Heart right ventricle (tissue), 16 donors: ENCODE measurements at regions of chr10 and their contacts with region 1.

Region 1: DNA sequence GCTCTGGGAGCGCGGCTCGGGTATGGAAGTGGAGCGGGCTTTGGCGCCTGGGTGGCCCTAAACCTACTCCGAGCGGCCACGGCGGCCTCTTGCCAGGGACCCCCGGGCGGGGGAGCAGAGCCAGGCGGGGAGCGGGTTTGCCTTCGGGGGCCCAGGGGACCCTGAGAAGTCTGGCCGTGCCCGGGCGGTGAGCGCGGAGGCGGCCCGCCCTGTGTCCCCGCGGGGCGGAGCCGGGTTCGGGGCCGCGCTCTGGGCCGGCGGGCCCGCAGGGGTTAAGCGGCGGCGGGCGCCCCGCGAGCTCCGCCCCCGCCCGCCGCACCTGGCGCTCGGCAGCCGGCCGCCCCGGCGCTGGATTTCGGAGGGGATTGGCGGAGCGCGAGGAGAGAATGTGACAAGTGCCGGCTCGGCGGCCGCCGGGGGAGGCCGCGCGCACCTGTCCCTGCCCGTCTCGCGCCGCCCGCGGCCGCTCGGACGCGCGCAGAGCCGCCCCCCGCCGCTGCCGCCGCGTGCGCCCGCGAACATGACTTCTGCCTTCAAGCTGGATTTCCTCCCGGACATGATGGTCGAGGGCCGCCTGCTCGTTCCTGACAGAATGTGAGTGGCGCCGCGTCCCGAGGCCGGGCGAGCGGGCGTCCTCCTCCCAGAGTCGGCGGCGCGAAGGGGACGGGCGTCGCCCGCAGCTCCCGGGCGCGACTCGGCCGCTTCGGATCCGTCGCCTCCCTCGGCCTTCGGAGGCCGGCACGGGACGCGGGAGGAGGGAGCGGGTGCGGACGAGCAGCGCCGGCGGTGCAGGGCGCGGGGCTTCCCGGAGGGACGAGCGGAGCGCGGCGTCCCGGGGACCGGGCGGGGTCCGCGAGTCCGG is at the start of gene CELF2:
- DNase-seq: peak; percentile 73 to 77
- ATAC-seq: peak; percentile 54 to 92 (median 70)
- H3K4me3 ChIP-seq: peak within 1 kb of the TSS; percentile 53 to 98 (median 72)
- H3K27ac ChIP-seq: peak within 1 kb of the TSS; percentile 87 to 97 (median 92)
- H3K4me1 ChIP-seq: peaks cover 4 to 85% (median 45%) of the 10 kb centered on the region in 9 donors
- H3K27me3 ChIP-seq: peaks cover 0 to 72% (median 0%) of the 10 kb centered on the region in 7 donors
- CTCF ChIP-seq: no peak
- total RNA-seq, gene CELF2: 61.9 to 90.9 (median 82.2) TPM

Region 2: DNA sequence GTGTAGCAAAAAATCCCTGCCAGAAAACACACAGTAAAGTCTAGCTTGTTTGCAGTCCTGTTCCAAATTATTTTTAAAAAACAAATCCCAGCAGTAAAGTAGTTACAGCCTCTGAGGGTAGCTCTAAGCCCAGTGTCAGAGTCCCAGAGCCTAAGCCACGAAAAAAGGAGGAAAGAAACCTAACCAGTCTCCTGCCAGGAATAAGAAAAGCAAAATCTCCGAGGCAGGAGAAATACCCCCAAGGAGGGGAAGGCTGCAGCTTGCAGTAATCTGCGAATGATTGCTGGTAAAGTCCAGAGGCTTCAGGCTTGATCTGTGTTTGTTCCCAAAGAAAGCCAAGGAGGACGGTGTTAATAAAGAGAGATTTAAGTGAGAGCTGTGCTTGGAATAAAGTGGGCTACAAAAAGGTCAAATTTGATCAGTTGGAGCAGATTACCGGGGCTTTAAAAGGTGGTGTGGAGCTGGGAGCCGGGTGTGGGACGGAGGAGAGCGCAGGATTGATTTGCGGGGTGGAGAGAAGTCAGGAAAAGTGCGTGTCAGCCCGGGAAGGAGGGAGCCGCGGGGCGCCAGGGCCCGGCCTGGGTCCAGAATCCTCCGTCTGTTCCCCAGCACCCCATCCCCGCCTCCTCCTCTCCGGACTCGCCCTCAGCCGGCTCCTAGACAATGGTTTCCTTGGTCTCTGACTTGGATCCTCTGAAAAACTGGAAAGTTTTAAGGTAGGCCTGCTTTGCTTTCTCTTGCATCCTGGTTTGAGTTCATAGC is 219.5 kb before region 1 on chr10:
- intact Hi-C with region 1: loop called in 3 of 10 experiments (anchors 5 kb)
- DNase-seq: peak in 1 of 2 donors; percentile 25
- ATAC-seq: peak; percentile 29 to 70 (median 68)
- H3K4me3 ChIP-seq: peak overlapping the region in 9 of 10 donors; percentile 15 to 48 (median 32)
- H3K27ac ChIP-seq: peak overlapping the region; percentile 69 to 93 (median 84)
- H3K4me1 ChIP-seq: peaks cover 0 to 69% (median 32%) of the 10 kb centered on the region in 9 donors
- H3K27me3 ChIP-seq: no peaks in the 10 kb centered on the region
- CTCF ChIP-seq: peak in 2 of 9 donors; percentile 11 to 21

Region 3: DNA sequence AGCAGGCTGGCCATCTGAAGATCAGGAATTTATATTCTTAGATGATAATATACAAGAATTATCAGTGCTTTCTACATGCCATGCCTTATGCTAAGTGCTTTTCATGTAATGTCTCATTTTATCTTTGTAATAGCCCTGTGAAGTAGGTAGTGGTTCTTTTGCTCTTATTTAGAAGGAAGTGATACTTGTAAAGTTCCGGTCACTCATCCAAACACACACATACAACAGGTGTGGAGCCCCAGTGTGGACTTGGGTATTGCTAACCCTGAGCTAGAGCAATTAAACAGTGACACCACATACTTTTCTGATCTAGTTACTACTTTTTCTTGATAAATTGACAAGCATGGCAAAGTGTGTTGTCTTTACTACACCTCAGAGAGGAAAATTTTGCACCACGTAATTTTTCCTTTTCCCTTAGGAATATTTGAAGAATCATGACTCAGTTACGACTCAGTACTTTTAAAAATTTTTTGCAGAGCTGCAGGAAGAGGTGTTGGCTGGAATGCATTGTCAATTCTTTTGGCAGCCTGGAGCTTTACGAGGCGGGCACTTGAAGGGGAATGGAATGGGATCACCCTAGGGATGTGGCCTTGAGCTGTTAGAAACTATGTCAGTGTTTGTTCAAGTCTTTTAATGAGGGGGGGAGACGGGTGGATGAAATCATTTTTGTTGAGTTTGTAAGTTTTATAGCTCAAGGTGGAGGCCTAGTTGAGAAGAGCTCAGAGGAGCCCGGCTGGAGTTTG is 212.6 kb before region 1 on chr10:
- intact Hi-C with region 1: loop called in 2 of 10 experiments (anchors 5 to 10 kb)
- DNase-seq: no peak
- ATAC-seq: peak in 4 of 8 donors; percentile 26 to 68 (median 52)
- H3K4me3 ChIP-seq: no peak overlapping the region
- H3K27ac ChIP-seq: peak overlapping the region in 6 of 10 donors; percentile 20 to 50 (median 34)
- H3K4me1 ChIP-seq: peaks cover 0 to 45% (median 20%) of the 10 kb centered on the region in 9 donors
- H3K27me3 ChIP-seq: no peaks in the 10 kb centered on the region
- CTCF ChIP-seq: no peak

Region 4: DNA sequence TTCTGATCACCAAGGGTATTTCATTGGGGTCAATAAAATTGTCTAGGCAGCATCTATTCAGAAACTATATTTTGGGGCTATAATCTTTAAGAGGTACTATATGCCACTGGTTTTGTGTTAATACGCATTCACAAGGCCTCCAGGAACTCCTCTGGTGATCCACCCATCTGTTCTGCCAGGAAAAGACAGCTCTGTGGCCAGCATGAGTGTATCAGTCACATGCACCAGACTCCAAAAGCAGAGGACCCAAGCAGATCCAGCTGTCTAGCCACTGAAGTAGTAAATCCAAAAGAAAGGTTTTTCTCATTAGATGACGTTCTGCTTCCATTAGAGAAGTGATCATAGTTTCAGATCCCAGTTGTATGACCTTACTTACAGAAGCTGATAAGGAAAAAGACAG is 199.7 kb before region 1 on chr10:
- intact Hi-C with region 1: loop called in 2 of 10 experiments (anchors 10 kb)
- DNase-seq: no peak
- ATAC-seq: peak; percentile 56 to 86 (median 82)
- H3K4me3 ChIP-seq: no peak overlapping the region
- H3K27ac ChIP-seq: peak overlapping the region in 8 of 10 donors; percentile 4 to 75 (median 54)
- H3K4me1 ChIP-seq: peaks cover 6 to 60% (median 9%) of the 10 kb centered on the region in 9 donors
- H3K27me3 ChIP-seq: no peaks in the 10 kb centered on the region
- CTCF ChIP-seq: no peak

Region 5: GRCh38 chr10:10911471-10911921 is 106.3 kb before region 1 on chr10:
- intact Hi-C with region 1: loop called in 1 of 10 experiments (anchors 5 kb)
- DNase-seq: peak; percentile 58 to 64
- ATAC-seq: peak; percentile 58 to 84 (median 80)
- H3K4me3 ChIP-seq: peak overlapping the region in 9 of 10 donors; percentile 1 to 44 (median 35)
- H3K27ac ChIP-seq: peak overlapping the region; percentile 6 to 91 (median 82)
- H3K4me1 ChIP-seq: peaks cover 3 to 48% (median 37%) of the 10 kb centered on the region in 9 donors
- H3K27me3 ChIP-seq: no peaks in the 10 kb centered on the region
- CTCF ChIP-seq: no peak